ENCODE measurements at regions of chr1 and their contacts with region 1.

Region 1: GRCh38 chr1:158506369-158506987 is 34.5 kb downstream of the OR10R2 start:
- DNase-seq: peak; percentile 8
- H3K4me3 Mint-ChIP-seq: no peak overlapping the region
- H3K27ac Mint-ChIP-seq: no peak overlapping the region
- H3K4me1 Mint-ChIP-seq: no peaks in the 10 kb centered on the region
- H3K27me3 Mint-ChIP-seq: peaks cover 17% of the 10 kb centered on the region

Region 2: GRCh38 chr1:158793604-158794003 is 287.1 kb after region 1 on chr1:
- intact Hi-C with region 1: loop called (anchors 10 kb)
- DNase-seq: peak; percentile 14
- H3K4me3 Mint-ChIP-seq: no peak overlapping the region
- H3K27ac Mint-ChIP-seq: no peak overlapping the region
- H3K4me1 Mint-ChIP-seq: no peaks in the 10 kb centered on the region
- H3K27me3 Mint-ChIP-seq: peaks cover 20% of the 10 kb centered on the region

Region 3: GRCh38 chr1:159071970-159072582 is 565.6 kb after region 1 on chr1:
- intact Hi-C with region 1: loop called (anchors 1 kb)
- DNase-seq: no peak
- H3K4me3 Mint-ChIP-seq: peak overlapping the region; percentile 12
- H3K27ac Mint-ChIP-seq: peak overlapping the region; percentile 37
- H3K4me1 Mint-ChIP-seq: peaks cover 70% of the 10 kb centered on the region
- H3K27me3 Mint-ChIP-seq: no peaks in the 10 kb centered on the region

Region 4: DNA sequence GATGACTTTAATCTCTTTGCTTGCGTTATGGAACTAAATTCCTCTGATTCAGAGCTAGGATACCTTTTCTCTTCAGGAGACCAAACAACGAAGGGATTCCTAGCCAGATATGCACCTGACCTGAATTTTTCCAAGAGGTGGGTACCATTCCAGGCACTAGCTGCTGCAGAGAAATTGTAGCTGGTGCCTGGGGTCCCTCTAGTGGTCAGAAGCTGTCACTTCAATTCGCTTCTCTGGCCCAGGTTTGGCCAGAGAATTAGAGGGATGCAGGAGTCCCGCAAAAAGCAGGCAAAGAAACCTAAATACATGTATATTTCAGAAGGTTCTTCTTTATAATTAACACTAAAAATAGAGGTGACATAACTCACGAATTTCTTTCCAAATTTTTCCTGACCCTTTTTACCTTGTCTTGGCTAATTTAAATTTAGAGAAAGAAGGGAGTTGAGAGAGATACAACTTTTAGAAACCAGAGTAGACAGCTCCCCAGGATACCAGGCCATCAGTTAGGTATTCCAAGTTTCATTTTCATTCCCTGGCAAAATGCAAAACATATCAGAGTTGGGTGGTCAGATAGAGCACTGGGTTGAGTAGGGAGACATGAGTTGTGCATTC is 707.8 kb after region 1 on chr1:
- intact Hi-C with region 1: loop called (anchors 5 kb)
- DNase-seq: peak; percentile 10
- H3K4me3 Mint-ChIP-seq: no peak overlapping the region
- H3K27ac Mint-ChIP-seq: no peak overlapping the region
- H3K4me1 Mint-ChIP-seq: no peaks in the 10 kb centered on the region
- H3K27me3 Mint-ChIP-seq: peaks cover 12% of the 10 kb centered on the region